Naive thymus-derived CD4-positive, alpha-beta T cell (primary cell): ENCODE measurements at regions of chr7 and their contacts with region 1.

Region 1: GRCh38 chr7:151833691-151834090 is 43.2 kb downstream of the PRKAG2 start:
- DNase-seq: no peak
- ATAC-seq: no peak
- H3K4me3 ChIP-seq: no peak overlapping the region
- H3K4me3 Mint-ChIP-seq: no peak overlapping the region
- H3K27ac ChIP-seq: no peak overlapping the region
- H3K27ac Mint-ChIP-seq: no peak overlapping the region
- H3K4me1 ChIP-seq: peaks cover 4 to 9% of the 10 kb centered on the region in 2 donors
- H3K4me1 Mint-ChIP-seq: peaks cover 11 to 54% (median 31%) of the 10 kb centered on the region in 7 donors
- H3K27me3 ChIP-seq: no peaks in the 10 kb centered on the region
- H3K27me3 Mint-ChIP-seq: no peaks in the 10 kb centered on the region

Region 2: DNA sequence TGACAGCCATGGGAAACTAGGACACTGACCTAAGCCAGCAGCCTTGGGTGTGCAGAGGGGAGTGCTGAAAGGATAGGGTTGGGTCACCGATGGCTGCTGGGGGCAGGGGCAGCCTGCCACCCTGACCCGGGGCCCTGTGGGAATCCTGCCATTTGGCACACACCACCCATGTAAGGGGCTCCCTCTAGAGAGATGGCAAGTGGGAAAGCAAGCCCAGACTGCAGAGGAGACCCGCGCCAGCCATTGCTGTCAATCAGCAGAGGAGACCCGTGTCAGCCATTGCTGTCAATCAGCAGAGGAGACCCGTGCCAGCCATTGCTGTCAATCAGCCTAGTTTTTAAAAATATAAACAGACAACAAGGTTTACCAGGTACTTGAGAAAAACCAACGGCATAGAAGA is 70.6 kb after region 1 on chr7:
- CTCF ChIA-PET with region 1: no interaction called
- POLR2A ChIA-PET with region 1: no interaction called
- intact Hi-C with region 1: loop called in 1 of 2 experiments (anchors 2 kb)
- DNase-seq: no peak
- ATAC-seq: no peak
- H3K4me3 ChIP-seq: no peak overlapping the region
- H3K4me3 Mint-ChIP-seq: no peak overlapping the region
- H3K27ac ChIP-seq: no peak overlapping the region
- H3K27ac Mint-ChIP-seq: no peak overlapping the region
- H3K4me1 ChIP-seq: no peaks in the 10 kb centered on the region
- H3K4me1 Mint-ChIP-seq: peaks cover 0 to 5% (median 0%) of the 10 kb centered on the region in 7 donors
- H3K27me3 ChIP-seq: no peaks in the 10 kb centered on the region
- H3K27me3 Mint-ChIP-seq: peaks cover 20 to 40% (median 23%) of the 10 kb centered on the region in 5 donors

Region 3: GRCh38 chr7:152476551-152476950 is 642.9 kb after region 1 on chr7:
- CTCF ChIA-PET with region 1: no interaction called
- POLR2A ChIA-PET with region 1: no interaction called
- intact Hi-C with region 1: no loop called
- DNase-seq: no peak
- ATAC-seq: no peak
- H3K4me3 ChIP-seq: no peak overlapping the region
- H3K4me3 Mint-ChIP-seq: no peak overlapping the region
- H3K27ac ChIP-seq: no peak overlapping the region
- H3K27ac Mint-ChIP-seq: no peak overlapping the region
- H3K4me1 ChIP-seq: no peaks in the 10 kb centered on the region
- H3K4me1 Mint-ChIP-seq: no peaks in the 10 kb centered on the region
- H3K27me3 ChIP-seq: no peaks in the 10 kb centered on the region
- H3K27me3 Mint-ChIP-seq: no peaks in the 10 kb centered on the region